H1 (cell line): ENCODE measurements at regions of chr2 and their contacts with region 1.

Region 1: DNA sequence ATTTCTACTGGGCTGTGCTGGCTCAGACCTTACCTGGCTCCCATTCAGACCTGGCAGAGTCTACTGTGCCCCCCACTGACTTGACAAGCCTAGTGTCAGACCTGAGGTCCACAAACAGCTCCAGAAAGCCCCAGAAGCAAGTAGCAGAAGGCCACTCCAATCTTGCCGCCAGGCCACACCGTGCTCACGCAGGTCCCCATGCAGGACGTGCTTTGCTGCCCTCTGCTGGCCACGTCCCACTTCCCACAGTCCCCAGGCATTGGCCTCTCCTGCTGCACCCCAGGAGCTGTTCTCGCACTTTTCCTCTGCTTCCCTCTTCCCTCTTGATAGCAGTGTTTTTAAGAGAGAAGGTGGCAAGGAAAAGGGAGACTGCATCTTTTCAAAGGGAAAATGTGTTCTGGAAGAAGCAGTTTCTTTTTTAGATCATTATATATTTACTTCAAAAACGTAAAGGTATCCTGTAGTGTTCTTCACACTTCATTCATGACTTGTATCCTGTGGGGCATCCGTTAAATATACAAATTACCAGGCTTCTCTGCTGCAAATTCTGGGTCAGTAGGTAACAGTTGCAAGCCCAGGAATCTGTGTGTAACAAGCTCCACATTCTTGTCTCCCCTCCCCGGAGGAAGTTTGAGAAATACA is 81.4 kb upstream of the PAPOLG start:
- DNase-seq: peak; percentile 63 to 94
- H3K4me3 ChIP-seq: no peak overlapping the region
- H3K27ac ChIP-seq: no peak overlapping the region
- H3K4me1 ChIP-seq: peaks cover 0 to 4% (median 3%) of the 10 kb centered on the region in 4 experiments; a peak in 3 of 7 replicates
- H3K27me3 ChIP-seq: no peaks in the 10 kb centered on the region
- CTCF ChIP-seq: peak; percentile 94 to 100 (median 99)
- EP300 ChIP-seq: no peak
- POLR2A ChIP-seq: no peak
- RAD21 ChIP-seq: peak; percentile 80 to 89

Region 2: DNA sequence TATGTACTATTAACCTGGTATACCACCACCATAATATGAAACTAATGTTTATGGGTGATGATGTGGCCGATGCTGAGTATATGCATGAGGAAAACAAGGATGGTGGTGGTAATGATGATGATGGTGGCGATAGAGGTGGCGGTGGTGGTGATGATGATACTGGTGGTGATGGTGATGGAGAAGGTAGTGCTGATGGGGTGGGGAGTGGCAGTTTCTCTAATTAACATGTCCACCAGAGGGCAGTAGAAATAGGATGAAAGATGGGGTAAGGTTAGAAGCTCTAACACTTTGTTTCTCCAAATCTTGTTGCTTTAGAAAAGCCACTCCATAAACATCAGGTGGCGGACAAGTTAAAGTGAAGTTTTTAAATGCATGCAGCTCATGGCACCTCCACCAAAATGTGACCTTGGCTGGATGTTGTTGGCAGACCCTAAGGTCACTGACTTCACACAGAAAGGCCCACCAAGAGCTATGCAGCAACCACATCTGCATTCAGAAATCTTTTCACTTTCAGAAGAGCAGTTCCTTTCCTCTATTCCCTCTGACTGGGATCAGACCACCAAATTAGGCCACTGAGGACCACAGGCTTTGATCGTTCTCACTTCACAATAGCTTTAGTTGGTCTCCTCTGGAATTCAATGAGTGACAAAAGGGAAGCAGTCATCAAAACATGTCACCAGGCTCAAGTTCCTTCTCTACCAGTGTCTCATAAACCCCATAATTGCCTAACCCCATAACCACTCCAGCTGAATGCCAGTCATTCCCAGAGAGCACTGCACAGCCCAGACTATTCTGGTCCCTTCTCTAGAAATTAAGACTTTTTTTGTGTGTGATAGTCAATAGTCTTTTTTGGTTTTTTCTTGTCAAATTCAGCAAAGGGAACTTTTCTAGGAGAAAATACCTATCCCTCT is 113.7 kb before region 1 on chr2:
- CTCF ChIA-PET with region 1: interaction called, 23 read pairs
- POLR2A ChIA-PET with region 1: no interaction called
- DNase-seq: no peak
- H3K4me3 ChIP-seq: no peak overlapping the region
- H3K27ac ChIP-seq: no peak overlapping the region
- H3K4me1 ChIP-seq: peaks cover 2 to 7% (median 3%) of the 10 kb centered on the region in 4 experiments; a peak in 4 of 7 replicates
- H3K27me3 ChIP-seq: peaks cover 0 to 1% (median 0%) of the 10 kb centered on the region in 4 experiments; a peak in 1 of 7 replicates
- CTCF ChIP-seq: peak in 2 of 3 experiments; percentile 50 to 57; a peak in 3 of 4 replicates
- EP300 ChIP-seq: no peak
- POLR2A ChIP-seq: no peak
- RAD21 ChIP-seq: peak; percentile 42 to 53

Region 3: DNA sequence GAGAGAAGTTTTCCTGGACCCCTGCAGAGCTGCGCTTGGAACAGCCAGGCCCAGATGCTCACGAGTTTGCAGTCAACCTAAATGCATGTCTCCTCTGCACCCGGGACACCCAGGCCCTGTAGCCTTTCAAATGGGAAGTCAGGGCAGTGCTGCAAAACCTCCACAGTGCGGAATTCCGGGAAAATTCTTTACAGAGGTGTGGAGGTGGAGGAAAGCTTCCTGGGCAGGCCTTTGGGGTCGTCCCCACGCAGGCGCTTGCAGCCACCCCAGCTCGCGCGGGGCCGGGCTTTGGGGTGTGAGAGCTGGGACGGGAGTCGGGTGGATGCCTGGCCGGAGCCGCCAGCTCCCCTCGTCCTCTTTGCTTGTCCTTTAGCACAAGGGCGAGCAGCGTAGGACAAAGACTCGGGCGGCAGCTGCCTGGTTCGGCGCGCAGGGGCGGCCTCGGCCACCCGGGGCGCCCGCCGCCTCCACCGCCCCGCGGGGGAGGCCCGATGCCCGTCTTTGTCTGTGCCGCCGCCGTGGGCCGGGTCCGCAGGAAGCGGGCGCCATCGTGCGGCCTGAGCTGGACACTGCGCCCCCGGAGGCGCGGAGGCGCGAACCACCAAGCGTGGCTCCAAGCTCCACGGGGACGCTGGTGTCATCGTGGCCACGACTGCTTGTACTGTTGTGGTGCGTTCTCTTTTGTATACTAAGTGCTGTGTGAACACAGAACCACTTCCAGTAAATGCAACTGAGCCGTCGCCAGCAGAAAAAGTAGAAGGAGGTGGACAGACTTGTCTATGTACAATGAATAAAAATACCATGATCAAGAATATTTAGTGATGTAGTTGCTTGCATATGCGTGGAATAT is 93.0 kb before region 1 on chr2:
- CTCF ChIA-PET with region 1: interaction called, 40 read pairs
- POLR2A ChIA-PET with region 1: interaction called, 3 read pairs
- DNase-seq: peak in 1 of 2 experiments; percentile 92
- H3K4me3 ChIP-seq: peak overlapping the region; percentile 22 to 70 (median 52)
- H3K27ac ChIP-seq: no peak overlapping the region
- H3K4me1 ChIP-seq: peaks cover 0 to 3% (median 0%) of the 10 kb centered on the region in 4 experiments; a peak in 1 of 7 replicates
- H3K27me3 ChIP-seq: peaks cover 1 to 12% (median 10%) of the 10 kb centered on the region in 4 experiments; a peak in 6 of 7 replicates
- CTCF ChIP-seq: peak; percentile 86 to 98 (median 95)
- EP300 ChIP-seq: peak in 1 of 2 experiments; percentile 49; a peak in 1 of 3 replicates
- POLR2A ChIP-seq: no peak
- RAD21 ChIP-seq: peak; percentile 92 to 97

Region 4: DNA sequence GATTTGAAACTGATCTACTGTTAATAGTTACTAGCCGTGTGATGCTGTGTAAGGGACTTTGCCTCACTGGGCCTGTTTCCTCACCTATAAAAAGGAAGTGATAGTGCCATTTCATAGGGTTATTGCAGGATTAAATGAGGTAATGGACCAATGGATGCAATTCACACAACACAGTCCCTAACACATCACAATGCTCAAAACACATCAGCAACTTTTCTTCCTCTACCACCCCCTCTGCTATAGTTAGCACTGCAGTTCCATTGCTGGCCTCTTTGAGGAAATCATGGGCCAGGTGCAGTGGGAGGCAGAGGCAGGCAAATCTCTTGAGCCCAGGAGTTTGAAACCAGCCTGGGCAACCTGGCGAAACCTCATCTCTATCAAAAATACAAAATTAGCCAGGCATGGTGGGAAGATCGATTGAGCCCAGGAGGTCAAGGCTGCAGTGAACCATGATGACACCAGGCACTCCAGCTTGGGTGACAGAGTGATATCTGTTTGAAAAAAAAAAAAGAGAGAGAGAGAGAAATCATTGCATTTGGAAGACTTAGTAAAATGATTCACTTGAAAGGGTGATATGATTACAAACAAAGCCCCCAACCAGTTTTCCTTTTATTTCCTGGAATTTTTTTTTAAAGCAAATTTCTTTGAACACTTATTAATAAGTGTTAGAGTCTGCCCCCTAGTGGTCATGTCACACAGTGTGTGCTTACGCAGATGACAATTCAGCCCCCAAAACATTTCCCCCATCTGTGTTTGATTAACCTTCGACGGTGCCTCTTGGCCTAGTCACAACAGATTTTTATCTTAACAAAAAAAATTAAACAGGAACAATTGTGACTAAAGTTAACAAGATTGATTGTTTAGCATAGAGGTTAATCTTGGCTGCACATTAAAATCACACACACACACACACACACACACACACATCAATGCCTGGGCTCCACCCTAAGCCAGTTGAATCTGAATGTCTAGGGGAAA is 32.5 kb before region 1 on chr2:
- CTCF ChIA-PET with region 1: interaction called, 13 read pairs
- POLR2A ChIA-PET with region 1: interaction called, 4 read pairs
- DNase-seq: peak in 1 of 2 experiments; percentile 47
- H3K4me3 ChIP-seq: no peak overlapping the region
- H3K27ac ChIP-seq: no peak overlapping the region
- H3K4me1 ChIP-seq: no peaks in the 10 kb centered on the region
- H3K27me3 ChIP-seq: no peaks in the 10 kb centered on the region; a peak in 1 of 7 replicates
- CTCF ChIP-seq: peak; percentile 27 to 57 (median 57)
- EP300 ChIP-seq: no peak
- POLR2A ChIP-seq: no peak
- RAD21 ChIP-seq: peak; percentile 28 to 40; a peak in 3 of 4 replicates

Region 5: DNA sequence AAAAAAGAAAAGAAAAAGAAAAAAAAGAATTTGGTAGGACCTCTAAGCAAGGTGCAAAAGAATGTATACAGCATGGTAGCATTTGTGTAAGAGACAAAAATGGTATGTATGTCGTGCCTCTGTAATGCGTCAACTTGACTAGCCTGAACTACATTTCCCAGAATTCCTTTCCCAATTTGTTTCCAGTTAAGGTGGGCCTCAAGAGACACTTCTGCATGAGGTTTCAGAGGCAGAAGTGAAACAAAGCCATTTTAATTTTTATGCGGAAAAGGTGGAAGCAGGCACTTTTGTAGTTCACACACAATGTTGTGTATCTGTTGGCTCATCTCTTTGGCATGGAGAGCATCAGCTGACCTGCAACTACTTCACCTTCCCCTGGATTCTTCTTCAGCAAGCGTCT is 25.0 kb after region 1 on chr2:
- CTCF ChIA-PET with region 1: interaction called, 12 read pairs
- POLR2A ChIA-PET with region 1: no interaction called
- DNase-seq: no peak
- H3K4me3 ChIP-seq: no peak overlapping the region
- H3K27ac ChIP-seq: no peak overlapping the region
- H3K4me1 ChIP-seq: no peaks in the 10 kb centered on the region
- H3K27me3 ChIP-seq: no peaks in the 10 kb centered on the region
- CTCF ChIP-seq: no peak
- EP300 ChIP-seq: no peak
- POLR2A ChIP-seq: no peak
- RAD21 ChIP-seq: no peak

Region 6: DNA sequence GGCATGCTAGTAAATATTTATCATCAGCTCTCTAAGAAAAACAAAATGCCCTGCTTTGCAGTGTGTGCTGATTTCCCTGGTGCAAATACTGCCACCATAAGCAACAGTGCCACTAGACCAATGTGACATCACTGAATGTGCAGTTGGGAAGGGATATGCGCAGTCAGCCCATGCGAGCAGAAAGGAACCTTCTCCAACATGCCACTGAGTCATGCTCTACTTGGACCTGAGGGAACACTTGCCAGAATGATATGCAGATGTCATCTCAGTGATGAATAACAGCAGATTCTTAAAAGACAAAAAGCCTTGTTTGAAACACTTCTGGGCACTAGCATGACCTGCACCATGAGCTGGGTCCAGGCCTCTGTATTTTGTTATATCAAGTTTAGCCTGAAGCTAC is 151.5 kb after region 1 on chr2:
- CTCF ChIA-PET with region 1: no interaction called
- POLR2A ChIA-PET with region 1: no interaction called
- DNase-seq: no peak
- H3K4me3 ChIP-seq: no peak overlapping the region
- H3K27ac ChIP-seq: no peak overlapping the region
- H3K4me1 ChIP-seq: no peaks in the 10 kb centered on the region
- H3K27me3 ChIP-seq: no peaks in the 10 kb centered on the region
- CTCF ChIP-seq: no peak
- EP300 ChIP-seq: no peak
- POLR2A ChIP-seq: no peak
- RAD21 ChIP-seq: no peak